Heart right ventricle (tissue), 16 donors: ENCODE measurements at regions of chr17 and their contacts with region 1.

Region 1: DNA sequence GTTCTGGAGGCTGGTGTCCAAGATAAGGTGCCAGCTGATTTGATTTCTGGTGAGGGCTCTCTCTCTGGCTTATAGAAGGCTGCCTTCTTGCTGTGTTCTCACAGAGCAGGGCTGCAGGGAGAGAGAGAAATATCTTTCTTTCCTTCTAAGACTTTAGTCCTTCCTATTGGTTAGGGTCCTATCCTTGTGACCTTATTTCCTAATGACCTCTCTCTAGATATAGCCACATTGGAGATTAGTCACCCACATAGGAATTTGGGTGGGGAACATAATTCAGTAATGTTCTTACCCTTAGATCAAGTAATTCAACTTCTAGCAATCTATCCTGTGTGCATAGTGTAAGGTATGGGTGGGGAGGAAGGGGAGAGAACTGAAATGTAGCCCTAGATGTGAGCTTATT is 18.0 kb upstream of the ABCA5 start:
- DNase-seq: no peak
- ATAC-seq: no peak
- H3K4me3 ChIP-seq: no peak overlapping the region
- H3K27ac ChIP-seq: no peak overlapping the region
- H3K4me1 ChIP-seq: peaks cover 0 to 6% (median 0%) of the 10 kb centered on the region in 9 donors
- H3K27me3 ChIP-seq: peaks cover 0 to 3% (median 0%) of the 10 kb centered on the region in 7 donors
- CTCF ChIP-seq: no peak

Region 2: DNA sequence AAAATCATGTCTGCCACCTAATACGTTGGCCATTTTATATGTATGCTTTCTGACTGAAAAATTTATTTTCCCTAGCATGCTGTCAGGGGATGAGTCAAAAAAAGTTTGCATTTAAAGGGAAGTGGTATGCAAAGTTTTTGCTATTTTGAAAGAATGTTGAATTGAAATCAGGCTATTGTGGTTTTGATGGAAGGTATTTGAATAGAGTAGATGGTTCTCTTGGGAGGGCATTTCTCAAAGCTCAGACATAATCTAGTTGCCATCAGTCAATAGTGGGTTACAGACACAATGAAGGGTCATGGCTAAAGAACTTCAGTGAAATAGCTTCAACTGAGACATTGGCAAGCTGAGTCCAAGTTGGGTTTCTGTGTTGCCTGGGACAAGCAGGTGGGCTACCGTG is 172.0 kb after region 1 on chr17:
- intact Hi-C with region 1: loop called in 1 of 10 experiments (anchors 10 kb)
- DNase-seq: no peak
- ATAC-seq: no peak
- H3K4me3 ChIP-seq: no peak overlapping the region
- H3K27ac ChIP-seq: no peak overlapping the region
- H3K4me1 ChIP-seq: no peaks in the 10 kb centered on the region
- H3K27me3 ChIP-seq: no peaks in the 10 kb centered on the region
- CTCF ChIP-seq: no peak